Esophagus muscularis mucosa (tissue), 4 donors: ENCODE measurements at regions of chr1 and their contacts with region 1.

Region 1: DNA sequence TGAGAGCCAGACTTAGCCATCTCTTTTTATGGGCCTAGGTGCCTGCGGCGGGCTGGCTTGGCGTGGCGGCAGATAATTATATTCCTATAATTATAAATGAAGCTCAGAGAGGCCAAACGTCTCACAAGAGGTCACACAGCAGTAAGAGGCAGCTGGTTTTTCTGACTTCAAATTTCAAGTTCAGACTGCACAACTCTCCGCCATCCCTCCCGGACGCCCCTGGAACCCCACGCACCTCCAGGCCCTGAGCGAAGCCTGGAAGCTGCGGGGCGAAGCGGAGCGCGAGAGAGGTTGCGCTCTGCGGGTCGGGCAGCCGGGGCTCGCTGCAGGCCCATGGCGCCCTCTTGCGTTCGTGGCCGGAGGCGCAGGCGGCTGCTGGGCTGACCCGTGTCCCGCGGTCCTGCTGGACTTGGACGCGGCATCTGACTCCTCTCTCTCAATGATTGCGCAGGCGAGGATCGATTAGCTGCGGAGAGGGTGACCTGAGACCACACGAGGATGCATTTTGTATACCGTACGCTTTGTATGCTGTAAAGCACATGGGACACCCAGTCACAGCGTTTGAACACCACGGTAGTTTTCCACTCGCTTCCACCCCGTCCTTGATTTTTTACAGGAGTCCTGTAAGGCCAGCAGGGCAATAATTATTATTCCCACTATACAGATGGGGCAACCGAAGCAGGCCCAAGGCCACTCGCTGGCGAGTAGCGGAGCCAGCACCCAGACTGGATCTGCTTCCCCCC is 272.7 kb downstream of the FOXD2 start:
- DNase-seq: no peak
- H3K4me3 ChIP-seq: peak overlapping the region; percentile 44 to 57 (median 48)
- H3K27ac ChIP-seq: no peak overlapping the region
- H3K4me1 ChIP-seq: peaks cover 21 to 33% (median 29%) of the 10 kb centered on the region in 4 donors
- H3K27me3 ChIP-seq: peaks cover 5 to 92% (median 42%) of the 10 kb centered on the region in 4 donors
- CTCF ChIP-seq: peak in 2 of 3 experiments; percentile 91 to 99
- EP300 ChIP-seq: no peak
- POLR2A ChIP-seq: no peak

Region 2: GRCh38 chr1:47179017-47179987 is 531.2 kb before region 1 on chr1:
- intact Hi-C with region 1: loop called (anchors 5 kb)
- DNase-seq: peak; percentile 94
- H3K4me3 ChIP-seq: peak overlapping the region; percentile 43 to 62 (median 46)
- H3K27ac ChIP-seq: peak overlapping the region in 1 of 4 donors; percentile 39
- H3K4me1 ChIP-seq: peaks cover 15 to 28% (median 24%) of the 10 kb centered on the region in 4 donors
- H3K27me3 ChIP-seq: peaks cover 0 to 48% (median 0%) of the 10 kb centered on the region in 4 donors
- CTCF ChIP-seq: peak; percentile 81 to 89 (median 81)
- EP300 ChIP-seq: no peak
- POLR2A ChIP-seq: no peak

Region 3: GRCh38 chr1:47362828-47363227 is 347.7 kb before region 1 on chr1:
- intact Hi-C with region 1: no loop called
- DNase-seq: no peak
- H3K4me3 ChIP-seq: no peak overlapping the region
- H3K27ac ChIP-seq: no peak overlapping the region
- H3K4me1 ChIP-seq: no peaks in the 10 kb centered on the region
- H3K27me3 ChIP-seq: no peaks in the 10 kb centered on the region
- CTCF ChIP-seq: no peak
- EP300 ChIP-seq: no peak
- POLR2A ChIP-seq: no peak

Region 4: DNA sequence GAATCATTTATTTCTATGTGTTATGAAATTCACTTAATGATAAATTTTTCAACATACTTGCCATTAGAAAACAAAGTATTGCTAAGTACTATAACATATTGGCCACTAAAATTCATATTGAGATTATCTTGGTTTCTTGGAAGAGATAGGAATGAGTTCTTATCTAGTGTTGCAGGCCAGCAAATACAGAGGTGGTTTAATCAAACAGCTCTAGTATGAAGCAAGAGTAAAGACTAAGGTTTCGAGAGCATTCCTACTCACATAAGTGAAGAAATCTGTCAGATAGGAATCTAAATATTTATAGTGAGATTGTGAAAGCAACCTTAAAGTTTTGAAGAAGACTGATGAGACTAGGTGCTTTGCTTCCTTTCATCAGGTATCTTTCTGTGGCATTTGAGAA is 332.4 kb before region 1 on chr1:
- intact Hi-C with region 1: no loop called
- DNase-seq: no peak
- H3K4me3 ChIP-seq: no peak overlapping the region
- H3K27ac ChIP-seq: no peak overlapping the region
- H3K4me1 ChIP-seq: peaks cover 0 to 15% (median 5%) of the 10 kb centered on the region in 4 donors
- H3K27me3 ChIP-seq: no peaks in the 10 kb centered on the region
- CTCF ChIP-seq: no peak
- EP300 ChIP-seq: no peak
- POLR2A ChIP-seq: no peak

Region 5: DNA sequence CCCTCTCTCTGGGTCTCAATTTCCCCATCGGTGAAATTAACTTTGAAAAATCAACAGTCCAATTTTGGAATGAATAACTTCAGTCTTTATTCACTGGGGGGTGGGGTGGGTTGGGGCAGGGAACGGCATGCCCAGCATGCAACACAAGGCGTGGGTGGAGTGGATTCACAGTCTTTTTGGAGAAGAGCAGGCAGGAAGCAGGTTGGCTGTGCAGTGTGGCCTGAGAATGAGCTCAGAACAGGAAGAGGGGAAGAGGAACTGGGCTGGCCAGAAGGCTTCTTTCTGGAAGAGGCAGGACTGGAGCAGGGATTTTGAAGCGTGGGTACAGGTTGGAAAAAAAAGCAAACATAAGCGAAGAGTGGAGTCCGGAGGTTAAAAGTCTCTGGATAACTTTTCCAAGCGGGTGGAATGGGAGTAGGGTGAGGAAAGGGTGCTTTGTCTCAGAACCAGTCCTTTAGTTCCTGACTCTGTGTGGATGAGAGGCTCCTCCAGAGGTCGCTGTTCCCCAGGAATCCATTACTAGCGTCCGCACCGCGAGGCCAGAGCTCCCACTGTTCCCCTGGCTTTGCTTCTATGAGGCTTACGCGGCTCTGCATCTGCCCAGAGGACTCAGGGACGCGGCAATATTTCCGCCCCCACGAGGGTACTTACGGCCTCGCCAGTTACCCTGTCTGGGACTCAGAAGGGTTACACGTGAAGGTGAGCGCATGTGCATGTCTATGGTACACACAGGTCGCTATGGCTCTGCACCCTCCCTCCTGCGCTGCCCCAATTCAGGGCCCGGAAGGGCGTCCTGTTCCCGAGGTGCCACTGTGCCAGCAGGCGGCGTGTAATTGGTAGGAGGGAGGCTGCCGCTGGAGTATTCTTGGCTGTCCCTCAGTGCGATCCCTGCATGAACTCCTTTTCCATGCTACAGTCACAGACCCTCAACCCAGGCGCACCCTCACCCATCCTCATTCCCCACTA is 278.1 kb before region 1 on chr1:
- intact Hi-C with region 1: loop called (anchors 1 kb)
- DNase-seq: no peak
- H3K4me3 ChIP-seq: peak overlapping the region in 2 of 4 donors; percentile 0 to 1
- H3K27ac ChIP-seq: no peak overlapping the region
- H3K4me1 ChIP-seq: peaks cover 40 to 55% (median 51%) of the 10 kb centered on the region in 4 donors
- H3K27me3 ChIP-seq: peaks cover 7 to 100% (median 70%) of the 10 kb centered on the region in 4 donors
- CTCF ChIP-seq: peak; percentile 65 to 72 (median 68)
- EP300 ChIP-seq: no peak
- POLR2A ChIP-seq: no peak

Region 6: DNA sequence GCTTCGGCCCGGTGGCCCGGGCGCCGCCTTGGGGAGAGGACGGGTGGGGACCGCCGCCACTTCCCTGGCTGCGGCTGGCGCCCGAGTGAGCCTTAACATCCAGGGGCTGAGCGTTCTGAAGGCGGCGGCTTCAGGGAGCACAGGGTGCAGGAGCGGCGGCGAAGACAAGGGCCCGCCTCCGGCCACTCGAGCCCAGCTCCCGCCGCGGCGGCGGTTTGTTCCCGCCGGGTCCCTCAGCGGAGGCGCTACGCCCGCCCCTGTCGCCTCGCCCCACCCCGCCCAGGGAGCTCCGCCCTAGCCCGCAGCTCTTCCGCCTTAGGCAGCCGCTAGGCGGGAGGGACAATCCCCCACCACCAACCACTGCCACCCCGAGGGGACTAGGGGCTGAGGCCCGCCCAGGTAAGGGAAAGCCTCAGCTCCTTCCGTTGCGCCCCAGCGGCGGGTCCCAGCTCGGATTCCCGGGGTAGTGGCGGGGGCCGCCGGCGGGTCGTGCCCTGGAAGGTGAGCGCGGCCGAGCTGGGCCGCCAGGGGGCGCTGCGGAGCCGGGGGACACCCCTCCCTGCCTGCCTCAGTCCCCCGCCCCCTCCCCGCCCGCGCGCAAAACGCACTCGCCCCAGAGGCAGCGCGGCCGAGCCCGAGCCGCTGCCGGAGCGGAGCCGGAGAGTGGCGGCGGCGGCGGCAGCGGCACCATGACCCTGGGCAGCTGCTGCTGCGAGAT is 272.9 kb before region 1 on chr1 and contains the start of gene FOXD2:
- intact Hi-C with region 1: loop called (anchors 1 kb)
- DNase-seq: peak; percentile 94
- H3K4me3 ChIP-seq: peak within 1 kb of the TSS; percentile 65 to 78 (median 66)
- H3K27ac ChIP-seq: peak within 1 kb of the TSS; percentile 71 to 78 (median 73)
- H3K4me1 ChIP-seq: peaks cover 35 to 61% (median 59%) of the 10 kb centered on the region in 4 donors
- H3K27me3 ChIP-seq: peaks cover 12 to 97% (median 75%) of the 10 kb centered on the region in 4 donors
- CTCF ChIP-seq: peak; percentile 93 to 97 (median 94)
- EP300 ChIP-seq: no peak
- POLR2A ChIP-seq: no peak
- total RNA-seq, gene FOXD2: under 0.01 to 0.57 (median 0.19) TPM in 3 of 4 donors, not detected in the other

Region 7: GRCh38 chr1:47527658-47528255 is 182.7 kb before region 1 on chr1:
- intact Hi-C with region 1: loop called (anchors 10 kb)
- DNase-seq: no peak
- H3K4me3 ChIP-seq: no peak overlapping the region
- H3K27ac ChIP-seq: no peak overlapping the region
- H3K4me1 ChIP-seq: peaks cover 2 to 3% (median 2%) of the 10 kb centered on the region in 4 donors
- H3K27me3 ChIP-seq: peaks cover 0 to 55% (median 0%) of the 10 kb centered on the region in 4 donors
- CTCF ChIP-seq: peak in 1 of 3 experiments; percentile 27
- EP300 ChIP-seq: no peak
- POLR2A ChIP-seq: no peak

Region 8: GRCh38 chr1:47593013-47593568 is 117.4 kb before region 1 on chr1:
- intact Hi-C with region 1: no loop called
- DNase-seq: peak; percentile 87
- H3K4me3 ChIP-seq: peak overlapping the region; percentile 19 to 44 (median 36)
- H3K27ac ChIP-seq: no peak overlapping the region
- H3K4me1 ChIP-seq: peaks cover 11 to 25% (median 12%) of the 10 kb centered on the region in 4 donors
- H3K27me3 ChIP-seq: peaks cover 0 to 77% (median 6%) of the 10 kb centered on the region in 4 donors
- CTCF ChIP-seq: no peak
- EP300 ChIP-seq: no peak
- POLR2A ChIP-seq: no peak

Region 9: GRCh38 chr1:47650197-47650596 is 60.3 kb before region 1 on chr1:
- intact Hi-C with region 1: no loop called
- DNase-seq: no peak
- H3K4me3 ChIP-seq: no peak overlapping the region
- H3K27ac ChIP-seq: no peak overlapping the region
- H3K4me1 ChIP-seq: peaks cover 0 to 7% (median 0%) of the 10 kb centered on the region in 4 donors
- H3K27me3 ChIP-seq: peaks cover 0 to 13% (median 0%) of the 10 kb centered on the region in 4 donors
- CTCF ChIP-seq: no peak
- EP300 ChIP-seq: no peak
- POLR2A ChIP-seq: no peak